ENCODE measurements at regions of chr12 and their contacts with region 1.

Region 1: GRCh38 chr12:52992699-52993557 is 13.3 kb upstream of the EIF4B start:
- DNase-seq: peak; percentile 99
- ATAC-seq: peak; percentile 88
- H3K4me3 ChIP-seq: peak overlapping the region; percentile 13 to 55 (median 18); a peak in 5 of 6 replicates
- H3K27ac ChIP-seq: peak overlapping the region; percentile 99
- H3K4me1 ChIP-seq: peaks cover 61% of the 10 kb centered on the region
- H3K27me3 ChIP-seq: no peaks in the 10 kb centered on the region
- CTCF ChIP-seq: no peak; the same call in 1 of the 2 replicates
- EP300 ChIP-seq: peak; percentile 65 to 87; a peak in 3 of 4 replicates
- POLR2A ChIP-seq: peak; percentile 17 to 66; a peak in 3 of 4 replicates
- RAD21 ChIP-seq: peak; percentile 42; the same call in 1 of the 2 replicates

Region 2: GRCh38 chr12:52884526-52885293 is 108.2 kb before region 1 on chr12:
- CTCF ChIA-PET with region 1: no interaction called
- POLR2A ChIA-PET with region 1: interaction called, 20 read pairs
- in situ Hi-C with region 1: no loop called
- intact Hi-C with region 1: no loop called
- DNase-seq: peak; percentile 97
- ATAC-seq: peak; percentile 80
- H3K4me3 ChIP-seq: peak overlapping the region in 2 of 3 experiments; percentile 29 to 42; a peak in 1 of 6 replicates
- H3K27ac ChIP-seq: peak overlapping the region; percentile 86
- H3K4me1 ChIP-seq: peaks cover 60% of the 10 kb centered on the region
- H3K27me3 ChIP-seq: no peaks in the 10 kb centered on the region
- CTCF ChIP-seq: peak; percentile 96
- EP300 ChIP-seq: peak; percentile 65 to 93; a peak in 2 of 4 replicates
- POLR2A ChIP-seq: no peak; a peak in 1 of 4 replicates
- RAD21 ChIP-seq: peak; percentile 98

Region 3: GRCh38 chr12:52924764-52925716 is 67.9 kb before region 1 on chr12:
- CTCF ChIA-PET with region 1: no interaction called
- POLR2A ChIA-PET with region 1: interaction called, 17 read pairs
- in situ Hi-C with region 1: no loop called
- intact Hi-C with region 1: no loop called
- DNase-seq: peak; percentile 76
- ATAC-seq: peak; percentile 38
- H3K4me3 ChIP-seq: peak overlapping the region; percentile 38 to 60 (median 43); a peak in 5 of 6 replicates
- H3K27ac ChIP-seq: peak overlapping the region; percentile 99
- H3K4me1 ChIP-seq: peaks cover 84% of the 10 kb centered on the region
- H3K27me3 ChIP-seq: no peaks in the 10 kb centered on the region
- CTCF ChIP-seq: no peak
- EP300 ChIP-seq: no peak; a peak in 1 of 4 replicates
- POLR2A ChIP-seq: no peak
- RAD21 ChIP-seq: no peak

Region 4: GRCh38 chr12:52949413-52950331 is 43.3 kb before region 1 on chr12:
- CTCF ChIA-PET with region 1: no interaction called
- POLR2A ChIA-PET with region 1: interaction called, 22 read pairs
- in situ Hi-C with region 1: no loop called
- intact Hi-C with region 1: no loop called
- DNase-seq: peak; percentile 98
- ATAC-seq: peak; percentile 83
- H3K4me3 ChIP-seq: peak overlapping the region; percentile 88 to 100 (median 99)
- H3K27ac ChIP-seq: peak overlapping the region; percentile 100
- H3K4me1 ChIP-seq: peaks cover 68% of the 10 kb centered on the region
- H3K27me3 ChIP-seq: peaks cover 0 to 2% of the 10 kb centered on the region in 2 experiments; a peak in 1 of 5 replicates
- CTCF ChIP-seq: peak; percentile 42; the same call in 1 of the 2 replicates
- EP300 ChIP-seq: peak in 1 of 2 experiments; percentile 90; a peak in 2 of 4 replicates
- POLR2A ChIP-seq: peak; percentile 82 to 96
- RAD21 ChIP-seq: peak; percentile 81

Region 5: GRCh38 chr12:53005986-53006809 is 13.3 kb after region 1 on chr12 and contains the start of gene EIF4B:
- CTCF ChIA-PET with region 1: no interaction called
- POLR2A ChIA-PET with region 1: interaction called, 159 read pairs
- in situ Hi-C with region 1: no loop called
- intact Hi-C with region 1: loop called (anchors 1 kb)
- DNase-seq: peak; percentile 97
- ATAC-seq: peak; percentile 96
- H3K4me3 ChIP-seq: peak within 1 kb of the TSS; percentile 89 to 93 (median 92)
- H3K27ac ChIP-seq: peak within 1 kb of the TSS; percentile 99
- H3K4me1 ChIP-seq: peaks cover 47% of the 10 kb centered on the region
- H3K27me3 ChIP-seq: no peaks in the 10 kb centered on the region; a peak in 1 of 5 replicates
- CTCF ChIP-seq: peak; percentile 22; the same call in 1 of the 2 replicates
- EP300 ChIP-seq: no peak; a peak in 2 of 4 replicates
- POLR2A ChIP-seq: peak; percentile 52 to 70; a peak in 3 of 4 replicates
- RAD21 ChIP-seq: no peak
- total RNA-seq, gene EIF4B: 548 and 779 TPM in 2 replicates

Region 6: GRCh38 chr12:53011887-53012286 is 19.0 kb after region 1 on chr12:
- CTCF ChIA-PET with region 1: no interaction called
- POLR2A ChIA-PET with region 1: interaction called, 159 read pairs
- in situ Hi-C with region 1: no loop called
- intact Hi-C with region 1: loop called (anchors 1 kb)
- DNase-seq: peak; percentile 80
- ATAC-seq: peak; percentile 66
- H3K4me3 ChIP-seq: peak overlapping the region in 2 of 3 experiments; percentile 15 to 44; a peak in 3 of 6 replicates
- H3K27ac ChIP-seq: peak overlapping the region; percentile 63
- H3K4me1 ChIP-seq: peaks cover 80% of the 10 kb centered on the region
- H3K27me3 ChIP-seq: no peaks in the 10 kb centered on the region; a peak in 1 of 5 replicates
- CTCF ChIP-seq: no peak
- EP300 ChIP-seq: peak in 1 of 2 experiments; percentile 36; a peak in 1 of 4 replicates
- POLR2A ChIP-seq: no peak
- RAD21 ChIP-seq: no peak

Region 7: GRCh38 chr12:53054112-53054833 is 61.3 kb after region 1 on chr12:
- CTCF ChIA-PET with region 1: no interaction called
- POLR2A ChIA-PET with region 1: interaction called, 11 read pairs
- in situ Hi-C with region 1: no loop called
- intact Hi-C with region 1: no loop called
- DNase-seq: peak; percentile 83
- ATAC-seq: peak; percentile 19
- H3K4me3 ChIP-seq: peak overlapping the region; percentile 52 to 73 (median 60); a peak in 5 of 6 replicates
- H3K27ac ChIP-seq: peak overlapping the region; percentile 69
- H3K4me1 ChIP-seq: peaks cover 40% of the 10 kb centered on the region
- H3K27me3 ChIP-seq: no peaks in the 10 kb centered on the region
- CTCF ChIP-seq: no peak
- EP300 ChIP-seq: no peak
- POLR2A ChIP-seq: peak in 1 of 2 experiments; percentile 44; a peak in 1 of 4 replicates
- RAD21 ChIP-seq: no peak

Region 8: GRCh38 chr12:53133722-53134121 is 140.8 kb after region 1 on chr12:
- CTCF ChIA-PET with region 1: no interaction called
- POLR2A ChIA-PET with region 1: no interaction called
- in situ Hi-C with region 1: no loop called
- intact Hi-C with region 1: no loop called
- DNase-seq: no peak
- ATAC-seq: no peak
- H3K4me3 ChIP-seq: no peak overlapping the region
- H3K27ac ChIP-seq: no peak overlapping the region
- H3K4me1 ChIP-seq: peaks cover 28% of the 10 kb centered on the region
- H3K27me3 ChIP-seq: no peaks in the 10 kb centered on the region
- CTCF ChIP-seq: no peak
- EP300 ChIP-seq: no peak
- POLR2A ChIP-seq: no peak
- RAD21 ChIP-seq: no peak